HCT116 (cell line): ENCODE measurements at regions of chr1 and their contacts with region 1.

Region 1: GRCh38 chr1:30379684-30380624 is 343.4 kb downstream of the MATN1 start:
- DNase-seq: peak; percentile 60
- ATAC-seq: peak; percentile 95
- H3K4me3 ChIP-seq: peak overlapping the region in 1 of 2 experiments; percentile 22; a peak in 2 of 4 replicates
- H3K27ac ChIP-seq: no peak overlapping the region; the same call in 1 of the 2 replicates
- H3K4me1 ChIP-seq: peaks cover 0 to 11% of the 10 kb centered on the region in 2 experiments; a peak in 3 of 4 replicates
- H3K27me3 ChIP-seq: 0 out of 2 replicates have a peak, but pooled peaks cover 3% of the 10 kb centered on the region
- CTCF ChIP-seq: peak; percentile 73 to 86 (median 82)
- POLR2A ChIP-seq: no peak
- RAD21 ChIP-seq: peak; percentile 78

Region 2: GRCh38 chr1:29682919-29683295 is 697.0 kb before region 1 on chr1:
- CTCF ChIA-PET with region 1: no interaction called
- POLR2A ChIA-PET with region 1: no interaction called
- RAD21 ChIA-PET with region 1: no interaction called
- intact Hi-C with region 1: no loop called
- DNase-seq: no peak
- ATAC-seq: no peak
- H3K4me3 ChIP-seq: no peak overlapping the region
- H3K27ac ChIP-seq: no peak overlapping the region
- H3K4me1 ChIP-seq: no peaks in the 10 kb centered on the region
- H3K27me3 ChIP-seq: peaks cover 16% of the 10 kb centered on the region; the same call in 1 of the 2 replicates
- CTCF ChIP-seq: no peak
- POLR2A ChIP-seq: no peak
- RAD21 ChIP-seq: no peak

Region 3: DNA sequence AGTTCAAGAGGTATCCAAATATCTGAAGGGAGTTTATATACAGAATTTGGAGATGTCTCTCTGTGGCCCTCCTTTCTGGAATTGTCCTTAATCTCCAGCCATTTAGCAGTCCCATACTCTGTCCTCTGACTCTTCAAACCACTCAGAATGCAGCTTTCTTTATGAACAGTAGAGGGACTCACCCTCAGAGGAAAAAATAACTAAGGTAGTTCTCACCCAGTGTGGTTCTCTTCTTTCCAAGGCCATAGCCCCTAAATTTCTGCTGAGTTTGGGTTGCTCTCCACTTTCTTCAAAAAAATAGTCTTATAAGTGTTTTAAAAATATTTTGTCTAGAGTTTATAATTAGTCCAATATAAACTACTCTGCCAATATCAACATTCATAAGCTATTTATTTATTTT is 26.3 kb before region 1 on chr1:
- CTCF ChIA-PET with region 1: interaction called, 54 read pairs
- POLR2A ChIA-PET with region 1: interaction called, 4 read pairs
- RAD21 ChIA-PET with region 1: interaction called in 1 of 2 experiments, 4 read pairs
- intact Hi-C with region 1: no loop called
- DNase-seq: no peak
- ATAC-seq: peak; percentile 82
- H3K4me3 ChIP-seq: no peak overlapping the region
- H3K27ac ChIP-seq: no peak overlapping the region
- H3K4me1 ChIP-seq: no peaks in the 10 kb centered on the region
- H3K27me3 ChIP-seq: peaks cover 17% of the 10 kb centered on the region
- CTCF ChIP-seq: peak; percentile 26 to 47 (median 44); a peak in 5 of 6 replicates
- POLR2A ChIP-seq: no peak
- RAD21 ChIP-seq: peak; percentile 22; the same call in 1 of the 2 replicates

Region 4: DNA sequence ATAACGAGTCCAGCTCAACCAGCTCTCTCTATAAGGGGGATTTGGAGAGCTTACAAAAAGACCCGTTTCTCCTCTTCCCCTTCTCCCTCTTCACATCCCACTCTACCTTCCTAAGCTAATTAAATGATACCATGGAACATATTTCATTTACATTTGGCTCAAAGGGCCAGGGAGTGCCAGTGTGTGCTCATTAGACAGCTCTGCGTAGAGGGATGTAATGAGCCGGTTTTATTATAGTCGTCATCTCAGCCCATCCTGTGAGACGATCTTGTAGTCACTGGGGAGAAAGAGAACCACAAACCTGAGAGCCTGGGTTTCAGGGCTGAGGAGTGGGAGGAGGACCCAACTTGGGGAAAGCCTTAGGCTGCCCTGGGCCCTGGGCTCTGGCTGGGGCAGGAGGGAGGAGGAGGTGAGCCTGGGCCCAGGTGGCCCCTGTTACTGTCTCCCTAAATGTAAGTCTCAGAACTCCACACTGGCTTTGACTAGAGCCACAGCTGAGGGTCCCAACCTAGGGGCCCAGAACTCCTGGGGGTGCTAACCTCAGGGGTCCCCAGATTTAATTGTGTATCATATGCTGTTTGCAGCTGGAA is 11.2 kb before region 1 on chr1:
- CTCF ChIA-PET with region 1: interaction called, 27 read pairs
- POLR2A ChIA-PET with region 1: no interaction called
- RAD21 ChIA-PET with region 1: no interaction called
- intact Hi-C with region 1: no loop called
- DNase-seq: no peak
- ATAC-seq: no peak
- H3K4me3 ChIP-seq: no peak overlapping the region
- H3K27ac ChIP-seq: no peak overlapping the region
- H3K4me1 ChIP-seq: peaks cover 0 to 9% of the 10 kb centered on the region in 2 experiments; a peak in 2 of 4 replicates
- H3K27me3 ChIP-seq: no peaks in the 10 kb centered on the region
- CTCF ChIP-seq: no peak
- POLR2A ChIP-seq: no peak
- RAD21 ChIP-seq: no peak

Region 5: DNA sequence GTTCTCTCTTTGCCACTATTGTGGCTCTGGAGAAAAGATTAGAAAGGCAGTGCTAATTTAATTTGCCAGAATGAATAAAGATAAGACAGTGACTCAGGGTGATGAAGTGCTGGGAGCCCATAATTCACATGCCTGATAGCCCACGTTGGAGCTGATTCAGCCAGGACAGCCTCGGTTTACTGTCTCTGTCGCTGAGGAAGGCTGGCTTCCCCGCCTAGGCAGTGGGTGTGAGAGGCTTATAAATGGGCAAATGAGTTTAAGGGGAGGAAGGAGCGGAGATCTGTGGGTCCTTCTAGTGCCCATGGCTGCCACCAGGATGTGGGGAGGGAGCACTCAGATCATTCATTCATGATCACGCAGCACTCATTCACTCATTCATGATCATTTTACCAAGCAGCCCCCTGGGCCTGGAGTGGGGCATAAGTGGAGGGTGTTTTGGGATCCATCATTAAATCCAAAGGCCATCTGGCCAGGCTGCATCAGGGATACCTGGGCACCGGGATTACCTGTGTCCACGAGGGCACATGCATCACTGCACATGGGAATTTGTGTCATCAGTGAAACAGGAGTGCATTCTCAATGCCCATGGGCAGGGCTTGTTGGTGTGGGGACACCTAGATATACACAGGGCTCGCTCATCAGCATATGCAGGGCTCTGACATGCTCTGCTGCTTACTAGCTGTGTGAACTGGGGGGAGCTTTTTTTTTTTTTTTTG is 28.1 kb after region 1 on chr1:
- CTCF ChIA-PET with region 1: interaction called, 15 read pairs
- POLR2A ChIA-PET with region 1: interaction called, 4 read pairs
- RAD21 ChIA-PET with region 1: no interaction called
- intact Hi-C with region 1: no loop called
- DNase-seq: no peak
- ATAC-seq: no peak
- H3K4me3 ChIP-seq: no peak overlapping the region
- H3K27ac ChIP-seq: no peak overlapping the region
- H3K4me1 ChIP-seq: peaks cover 0 to 14% of the 10 kb centered on the region in 2 experiments; a peak in 1 of 4 replicates
- H3K27me3 ChIP-seq: no peaks in the 10 kb centered on the region
- CTCF ChIP-seq: no peak
- POLR2A ChIP-seq: no peak
- RAD21 ChIP-seq: no peak

Region 6: GRCh38 chr1:30473922-30474817 is 94.2 kb after region 1 on chr1:
- CTCF ChIA-PET with region 1: no interaction called
- POLR2A ChIA-PET with region 1: no interaction called
- RAD21 ChIA-PET with region 1: no interaction called
- intact Hi-C with region 1: no loop called
- DNase-seq: no peak
- ATAC-seq: no peak
- H3K4me3 ChIP-seq: no peak overlapping the region
- H3K27ac ChIP-seq: no peak overlapping the region
- H3K4me1 ChIP-seq: no peaks in the 10 kb centered on the region
- H3K27me3 ChIP-seq: peaks cover 16% of the 10 kb centered on the region
- CTCF ChIP-seq: no peak
- POLR2A ChIP-seq: no peak
- RAD21 ChIP-seq: no peak

Region 7: GRCh38 chr1:30763651-30764248 is 383.8 kb after region 1 on chr1:
- CTCF ChIA-PET with region 1: no interaction called
- POLR2A ChIA-PET with region 1: no interaction called
- RAD21 ChIA-PET with region 1: no interaction called
- intact Hi-C with region 1: no loop called
- DNase-seq: no peak
- ATAC-seq: no peak
- H3K4me3 ChIP-seq: no peak overlapping the region
- H3K27ac ChIP-seq: no peak overlapping the region
- H3K4me1 ChIP-seq: peaks cover 0 to 15% of the 10 kb centered on the region in 2 experiments; a peak in 2 of 4 replicates
- H3K27me3 ChIP-seq: no peaks in the 10 kb centered on the region
- CTCF ChIP-seq: no peak
- POLR2A ChIP-seq: no peak
- RAD21 ChIP-seq: no peak